A673 (cell line): ENCODE measurements at regions of chr1 and their contacts with region 1.

Region 1: GRCh38 chr1:154198756-154199562 is 7.1 kb upstream of the TPM3 start:
- DNase-seq: peak; percentile 82
- H3K4me3 ChIP-seq: peak overlapping the region; percentile 13
- H3K27ac ChIP-seq: no peak overlapping the region
- H3K4me1 ChIP-seq: no peaks in the 10 kb centered on the region
- H3K27me3 ChIP-seq: no peaks in the 10 kb centered on the region
- CTCF ChIP-seq: peak; percentile 73

Region 2: GRCh38 chr1:154212083-154212482 is 13.1 kb after region 1 on chr1:
- CTCF ChIA-PET with region 1: interaction called, 13 read pairs
- POLR2A ChIA-PET with region 1: no interaction called
- intact Hi-C with region 1: no loop called
- DNase-seq: no peak
- H3K4me3 ChIP-seq: no peak overlapping the region
- H3K27ac ChIP-seq: no peak overlapping the region
- H3K4me1 ChIP-seq: no peaks in the 10 kb centered on the region
- H3K27me3 ChIP-seq: no peaks in the 10 kb centered on the region
- CTCF ChIP-seq: no peak

Region 3: DNA sequence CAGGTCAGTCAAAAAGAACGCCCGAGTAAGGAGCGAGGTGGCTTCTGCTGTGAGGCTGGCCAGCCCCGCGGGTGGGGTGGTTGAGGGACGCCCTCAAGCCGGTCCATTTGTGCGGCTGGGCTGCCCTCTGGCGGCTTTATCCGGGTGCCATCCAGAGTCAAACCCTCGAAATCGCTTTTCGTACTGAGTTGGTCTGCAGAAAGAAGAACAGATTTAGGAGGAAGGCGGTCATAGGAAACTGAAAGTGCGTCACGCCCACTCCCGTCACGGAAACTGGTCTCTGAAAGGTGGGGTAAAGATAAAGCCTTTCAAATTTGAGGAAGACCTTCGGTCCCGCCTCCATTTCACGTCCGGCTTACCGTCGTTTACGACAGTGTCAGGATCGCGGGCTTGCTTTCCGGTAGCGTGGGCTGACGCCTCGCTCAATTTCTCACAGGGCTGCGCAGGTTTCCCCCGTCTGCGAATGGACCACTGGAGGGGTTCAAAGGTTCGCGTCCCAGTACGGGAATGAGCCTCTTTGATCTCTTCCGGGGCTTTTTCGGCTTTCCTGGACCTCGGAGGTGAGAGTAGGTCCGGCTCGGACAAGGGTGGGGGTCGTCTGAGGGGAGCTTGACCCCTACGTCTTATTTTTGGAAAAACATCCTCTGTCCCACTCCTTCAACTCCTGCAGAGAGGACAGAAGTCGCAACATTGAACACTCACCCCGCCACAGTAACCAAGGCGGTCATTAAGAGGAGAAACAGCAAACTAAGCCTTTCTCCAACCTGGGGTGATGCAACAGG is 73.4 kb after region 1 on chr1 and contains the start of gene HAX1:
- CTCF ChIA-PET with region 1: interaction called, 4 read pairs
- POLR2A ChIA-PET with region 1: no interaction called
- intact Hi-C with region 1: loop called (anchors 1 kb)
- DNase-seq: peak; percentile 98
- H3K4me3 ChIP-seq: peak within 1 kb of the TSS; percentile 85
- H3K27ac ChIP-seq: peak within 1 kb of the TSS; percentile 86
- H3K4me1 ChIP-seq: peaks cover 7% of the 10 kb centered on the region
- H3K27me3 ChIP-seq: no peaks in the 10 kb centered on the region
- CTCF ChIP-seq: peak; percentile 84
- total RNA-seq, gene HAX1: 129 and 134 TPM in 2 replicates

Region 4: DNA sequence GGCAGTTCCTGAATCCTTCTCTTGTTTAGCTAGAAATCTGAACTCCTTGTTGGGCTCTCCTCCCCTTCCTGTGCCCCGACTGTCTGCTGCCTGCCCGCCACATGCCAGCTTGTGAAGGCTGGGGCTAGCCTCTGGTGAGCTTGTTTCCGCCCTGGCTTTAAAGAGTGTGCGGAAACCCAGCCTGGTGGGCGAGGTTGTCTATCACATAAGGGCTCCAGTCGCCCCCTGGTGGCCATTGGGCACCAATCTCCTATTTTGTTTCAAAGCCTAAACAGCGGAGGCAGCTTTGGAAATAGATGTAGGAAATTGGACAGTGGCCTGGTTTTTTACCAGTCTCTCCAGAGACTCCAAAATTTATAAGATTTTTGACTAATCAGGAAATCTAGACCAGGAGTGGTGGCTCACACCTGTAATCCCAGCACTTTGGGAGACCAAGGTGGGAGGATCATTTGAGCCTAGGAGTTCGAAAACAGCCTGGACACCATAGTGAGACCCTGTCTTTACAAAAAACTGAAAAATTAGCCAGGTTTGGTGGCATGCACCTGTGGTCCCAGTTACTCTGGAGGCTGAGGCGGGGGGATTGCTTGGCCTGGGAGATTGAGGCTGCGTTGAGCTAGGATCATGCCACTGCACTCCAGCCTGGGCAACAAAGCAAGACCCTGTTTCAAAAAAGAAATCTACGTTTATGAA is 136.2 kb after region 1 on chr1:
- CTCF ChIA-PET with region 1: interaction called, 12 read pairs
- POLR2A ChIA-PET with region 1: no interaction called
- intact Hi-C with region 1: loop called (anchors 2 kb)
- DNase-seq: peak; percentile 92
- H3K4me3 ChIP-seq: no peak overlapping the region
- H3K27ac ChIP-seq: no peak overlapping the region
- H3K4me1 ChIP-seq: no peaks in the 10 kb centered on the region
- H3K27me3 ChIP-seq: no peaks in the 10 kb centered on the region
- CTCF ChIP-seq: peak; percentile 92